CD14-positive monocyte (primary cell): ENCODE measurements at regions of chr6 and their contacts with region 1.

Region 1: DNA sequence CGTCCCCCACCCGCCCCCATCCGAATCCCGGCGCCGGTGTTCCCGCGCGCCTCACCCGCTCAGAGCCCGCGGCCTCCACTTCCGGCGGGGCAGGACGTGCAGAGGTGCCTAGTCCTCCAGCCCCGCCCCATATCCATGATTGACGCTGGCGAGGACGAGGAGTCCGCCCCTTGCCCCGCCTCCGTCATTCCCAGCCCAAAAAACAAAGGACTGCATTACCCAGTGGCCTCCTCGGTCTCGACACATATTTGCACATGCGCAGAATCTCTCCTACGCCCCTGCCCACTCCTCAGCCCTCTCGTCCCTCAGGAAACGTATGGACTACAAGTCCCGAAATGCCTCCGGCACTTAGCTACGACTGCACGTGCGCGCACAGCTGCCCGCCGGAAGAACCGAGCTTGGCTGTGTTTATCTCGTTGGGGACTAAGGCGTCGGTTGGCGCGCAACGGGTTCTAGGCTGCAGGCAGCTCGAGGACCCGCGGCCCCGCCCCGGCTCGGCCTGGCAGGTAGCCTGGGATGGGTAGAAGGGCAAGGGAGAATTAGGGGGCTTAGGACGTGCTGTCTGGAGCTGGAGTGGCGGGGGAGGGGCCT is at the starts of genes KLHDC3 and MEA1:
- DNase-seq: peak; percentile 99
- H3K4me3 ChIP-seq: peak within 1 kb of the TSS; percentile 69 to 96 (median 73)
- H3K4me3 Mint-ChIP-seq: peak within 1 kb of the TSS; percentile 91 to 98
- H3K27ac ChIP-seq: peak within 1 kb of the TSS in 1 of 2 donors; percentile 71
- H3K27ac Mint-ChIP-seq: peak within 1 kb of the TSS; percentile 80 to 95 (median 91)
- H3K4me1 ChIP-seq: peaks cover 38 to 41% of the 10 kb centered on the region in 2 donors
- H3K4me1 Mint-ChIP-seq: peaks cover 39% of the 10 kb centered on the region
- H3K27me3 ChIP-seq: no peaks in the 10 kb centered on the region
- H3K27me3 Mint-ChIP-seq: peaks cover 0 to 3% (median 3%) of the 10 kb centered on the region in 3 donors
- CTCF ChIP-seq: no peak
- polyA plus RNA-seq, gene KLHDC3: 51.9 to 141 (median 106) TPM
- polyA plus RNA-seq, gene MEA1: 31.0 to 59.6 (median 58.8) TPM

Region 2: GRCh38 chr6:42901536-42901957 is 112.4 kb before region 1 on chr6:
- intact Hi-C with region 1: loop called in 1 of 2 experiments (anchors 10 kb)
- DNase-seq: peak; percentile 72 to 87 (median 82)
- H3K4me3 ChIP-seq: no peak overlapping the region
- H3K4me3 Mint-ChIP-seq: peak overlapping the region in 1 of 2 donors; percentile 35
- H3K27ac ChIP-seq: no peak overlapping the region
- H3K27ac Mint-ChIP-seq: no peak overlapping the region
- H3K4me1 ChIP-seq: peaks cover 0 to 14% of the 10 kb centered on the region in 2 donors
- H3K4me1 Mint-ChIP-seq: peaks cover 21% of the 10 kb centered on the region
- H3K27me3 ChIP-seq: no peaks in the 10 kb centered on the region
- H3K27me3 Mint-ChIP-seq: peaks cover 0 to 1% (median 0%) of the 10 kb centered on the region in 3 donors
- CTCF ChIP-seq: peak; percentile 81

Region 3: GRCh38 chr6:42978839-42979522 is 35.0 kb before region 1 on chr6 and contains the start of gene PEX6:
- intact Hi-C with region 1: loop called (anchors 5 kb)
- DNase-seq: peak; percentile 72 to 84 (median 82)
- H3K4me3 ChIP-seq: peak within 1 kb of the TSS; percentile 70 to 92 (median 91)
- H3K4me3 Mint-ChIP-seq: peak within 1 kb of the TSS; percentile 94 to 96
- H3K27ac ChIP-seq: peak within 1 kb of the TSS; percentile 47 to 93
- H3K27ac Mint-ChIP-seq: peak within 1 kb of the TSS; percentile 89 to 96 (median 93)
- H3K4me1 ChIP-seq: peaks cover 28 to 31% of the 10 kb centered on the region in 2 donors
- H3K4me1 Mint-ChIP-seq: peaks cover 35% of the 10 kb centered on the region
- H3K27me3 ChIP-seq: no peaks in the 10 kb centered on the region
- H3K27me3 Mint-ChIP-seq: no peaks in the 10 kb centered on the region
- CTCF ChIP-seq: no peak
- polyA plus RNA-seq, gene PEX6: 10.6 to 16.2 (median 15.5) TPM

Region 4: GRCh38 chr6:43047998-43048397 is 34.1 kb after region 1 on chr6:
- intact Hi-C with region 1: no loop called
- DNase-seq: no peak
- H3K4me3 ChIP-seq: no peak overlapping the region
- H3K4me3 Mint-ChIP-seq: no peak overlapping the region
- H3K27ac ChIP-seq: no peak overlapping the region
- H3K27ac Mint-ChIP-seq: peak overlapping the region in 1 of 7 donors; percentile 23
- H3K4me1 ChIP-seq: peaks cover 5 to 6% of the 10 kb centered on the region in 2 donors
- H3K4me1 Mint-ChIP-seq: peaks cover 17% of the 10 kb centered on the region
- H3K27me3 ChIP-seq: no peaks in the 10 kb centered on the region
- H3K27me3 Mint-ChIP-seq: peaks cover 0 to 3% (median 1%) of the 10 kb centered on the region in 3 donors
- CTCF ChIP-seq: no peak

Region 5: DNA sequence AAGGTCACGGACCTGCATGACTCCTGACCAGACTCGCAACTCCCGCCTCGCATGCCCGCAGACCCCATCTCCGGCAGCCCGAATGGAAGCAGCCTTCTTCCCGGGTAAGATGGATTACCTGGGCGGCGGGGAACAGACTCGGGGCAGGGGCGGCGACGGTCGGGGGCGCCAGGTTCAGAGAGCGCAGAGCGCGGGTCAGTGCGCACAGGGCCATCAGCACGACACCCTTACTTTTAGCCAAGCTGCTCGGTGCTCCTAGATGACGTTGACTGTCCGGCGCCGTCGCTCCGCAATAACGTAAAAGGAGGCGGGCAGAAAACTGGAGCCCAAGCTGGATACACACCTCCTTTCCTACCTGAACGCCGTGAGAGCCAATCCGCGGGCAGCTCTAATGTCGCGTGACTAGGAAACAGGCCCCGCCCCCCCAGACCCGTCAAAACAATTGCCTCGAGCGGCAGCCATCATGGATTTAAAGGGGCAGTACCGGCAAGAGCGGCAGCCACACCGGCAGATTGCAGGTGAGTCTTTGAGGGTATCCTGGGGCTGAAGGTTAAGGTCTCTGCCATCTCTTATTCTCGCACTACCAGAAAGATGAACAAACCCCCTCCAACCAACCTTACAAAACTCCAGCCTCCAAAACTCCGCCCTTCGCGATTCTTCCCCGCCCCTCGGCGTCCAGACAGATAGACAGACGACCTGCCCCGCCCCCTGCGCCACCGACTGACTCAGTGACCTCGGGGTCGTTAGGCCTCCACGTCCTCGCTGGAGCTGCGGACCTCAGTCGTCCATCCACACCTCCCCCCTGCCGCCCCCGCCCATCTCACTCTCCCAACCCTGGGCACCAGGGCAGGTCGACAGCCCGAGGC is 45.5 kb after region 1 on chr6 and contains the starts of genes KLC4 and MRPL2:
- intact Hi-C with region 1: loop called (anchors 2 kb)
- DNase-seq: peak; percentile 98 to 99 (median 98)
- H3K4me3 ChIP-seq: peak within 1 kb of the TSS; percentile 69 to 99 (median 98)
- H3K4me3 Mint-ChIP-seq: peak within 1 kb of the TSS; percentile 85 to 96
- H3K27ac ChIP-seq: peak within 1 kb of the TSS; percentile 64 to 99
- H3K27ac Mint-ChIP-seq: peak within 1 kb of the TSS; percentile 90 to 100 (median 99)
- H3K4me1 ChIP-seq: peaks cover 14 to 23% of the 10 kb centered on the region in 2 donors
- H3K4me1 Mint-ChIP-seq: peaks cover 25% of the 10 kb centered on the region
- H3K27me3 ChIP-seq: no peaks in the 10 kb centered on the region
- H3K27me3 Mint-ChIP-seq: peaks cover 0 to 2% (median 0%) of the 10 kb centered on the region in 3 donors
- CTCF ChIP-seq: no peak
- polyA plus RNA-seq, gene KLC4: 6.0 to 16.2 (median 6.1) TPM
- polyA plus RNA-seq, gene MRPL2: 23.9 to 26.9 (median 26.3) TPM

Region 6: DNA sequence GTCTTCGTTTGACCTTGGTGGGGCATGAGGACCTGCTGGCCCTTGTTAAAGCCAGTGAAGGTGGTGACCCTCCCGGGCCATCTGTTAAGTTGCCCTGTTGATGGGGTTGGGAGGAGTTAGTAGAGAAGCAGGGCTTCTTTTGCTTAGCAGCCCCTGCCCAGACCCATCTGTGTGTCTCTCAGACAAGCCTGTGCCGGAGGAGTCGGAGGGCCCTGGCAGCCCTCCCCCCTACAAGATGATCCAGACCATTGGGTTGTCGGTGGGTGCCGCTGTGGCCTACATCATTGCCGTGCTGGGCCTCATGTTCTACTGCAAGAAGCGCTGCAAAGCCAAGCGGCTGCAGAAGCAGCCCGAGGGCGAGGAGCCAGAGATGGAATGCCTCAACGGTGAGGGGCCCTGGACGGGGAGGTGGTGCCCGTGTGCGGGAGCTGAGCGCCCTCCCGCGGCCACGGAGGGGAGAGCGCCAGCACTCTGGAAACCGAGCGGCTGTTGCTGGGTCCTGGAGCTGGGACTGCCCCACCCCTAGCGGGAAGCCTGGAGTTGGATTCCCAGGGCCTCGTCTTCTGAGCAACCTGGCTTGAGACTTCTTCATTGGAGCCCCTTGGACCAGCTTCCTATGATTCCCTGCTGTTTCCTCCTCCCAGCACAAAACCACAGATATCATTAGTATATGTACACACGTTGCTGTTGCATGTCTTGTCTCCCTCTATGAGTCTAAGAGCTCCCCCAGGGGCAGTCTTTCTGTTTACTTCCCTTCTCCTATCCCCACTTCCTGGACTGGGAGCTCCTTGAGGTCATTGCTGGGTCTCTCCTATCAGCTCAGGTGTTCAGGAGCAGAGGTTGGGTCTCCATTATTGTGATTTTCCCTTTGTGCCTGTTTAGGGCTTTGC is 129.5 kb after region 1 on chr6:
- intact Hi-C with region 1: loop called in 1 of 2 experiments (anchors 5 kb)
- DNase-seq: peak; percentile 48 to 60 (median 59)
- H3K4me3 ChIP-seq: peak overlapping the region in 1 of 3 experiments; percentile 36
- H3K4me3 Mint-ChIP-seq: peak overlapping the region in 1 of 2 donors; percentile 51
- H3K27ac ChIP-seq: no peak overlapping the region
- H3K27ac Mint-ChIP-seq: peak overlapping the region in 1 of 7 donors; percentile 66
- H3K4me1 ChIP-seq: peaks cover 7% of the 10 kb centered on the region in 2 donors
- H3K4me1 Mint-ChIP-seq: peaks cover 7% of the 10 kb centered on the region
- H3K27me3 ChIP-seq: no peaks in the 10 kb centered on the region
- H3K27me3 Mint-ChIP-seq: peaks cover 0 to 6% (median 0%) of the 10 kb centered on the region in 3 donors
- CTCF ChIP-seq: peak; percentile 86

Region 7: GRCh38 chr6:43516697-43517504 is 503.0 kb after region 1 on chr6 and contains the starts of genes POLR1C and YIPF3:
- intact Hi-C with region 1: loop called in 1 of 2 experiments (anchors 10 kb)
- DNase-seq: peak; percentile 98 to 100 (median 98)
- H3K4me3 ChIP-seq: peak within 1 kb of the TSS; percentile 61 to 100 (median 78)
- H3K4me3 Mint-ChIP-seq: no peak within 1 kb of the TSS
- H3K27ac ChIP-seq: peak within 1 kb of the TSS; percentile 35 to 93
- H3K27ac Mint-ChIP-seq: peak within 1 kb of the TSS in 1 of 7 donors; percentile 55
- H3K4me1 ChIP-seq: peaks cover 23 to 36% of the 10 kb centered on the region in 2 donors
- H3K4me1 Mint-ChIP-seq: peaks cover 31% of the 10 kb centered on the region
- H3K27me3 ChIP-seq: no peaks in the 10 kb centered on the region
- H3K27me3 Mint-ChIP-seq: no peaks in the 10 kb centered on the region
- CTCF ChIP-seq: no peak
- polyA plus RNA-seq, gene POLR1C: 4.5 to 18.3 (median 6.1) TPM
- polyA plus RNA-seq, gene YIPF3: 112 to 126 (median 123) TPM